ENCODE measurements at regions of chr15 and their contacts with region 1.

Region 1: DNA sequence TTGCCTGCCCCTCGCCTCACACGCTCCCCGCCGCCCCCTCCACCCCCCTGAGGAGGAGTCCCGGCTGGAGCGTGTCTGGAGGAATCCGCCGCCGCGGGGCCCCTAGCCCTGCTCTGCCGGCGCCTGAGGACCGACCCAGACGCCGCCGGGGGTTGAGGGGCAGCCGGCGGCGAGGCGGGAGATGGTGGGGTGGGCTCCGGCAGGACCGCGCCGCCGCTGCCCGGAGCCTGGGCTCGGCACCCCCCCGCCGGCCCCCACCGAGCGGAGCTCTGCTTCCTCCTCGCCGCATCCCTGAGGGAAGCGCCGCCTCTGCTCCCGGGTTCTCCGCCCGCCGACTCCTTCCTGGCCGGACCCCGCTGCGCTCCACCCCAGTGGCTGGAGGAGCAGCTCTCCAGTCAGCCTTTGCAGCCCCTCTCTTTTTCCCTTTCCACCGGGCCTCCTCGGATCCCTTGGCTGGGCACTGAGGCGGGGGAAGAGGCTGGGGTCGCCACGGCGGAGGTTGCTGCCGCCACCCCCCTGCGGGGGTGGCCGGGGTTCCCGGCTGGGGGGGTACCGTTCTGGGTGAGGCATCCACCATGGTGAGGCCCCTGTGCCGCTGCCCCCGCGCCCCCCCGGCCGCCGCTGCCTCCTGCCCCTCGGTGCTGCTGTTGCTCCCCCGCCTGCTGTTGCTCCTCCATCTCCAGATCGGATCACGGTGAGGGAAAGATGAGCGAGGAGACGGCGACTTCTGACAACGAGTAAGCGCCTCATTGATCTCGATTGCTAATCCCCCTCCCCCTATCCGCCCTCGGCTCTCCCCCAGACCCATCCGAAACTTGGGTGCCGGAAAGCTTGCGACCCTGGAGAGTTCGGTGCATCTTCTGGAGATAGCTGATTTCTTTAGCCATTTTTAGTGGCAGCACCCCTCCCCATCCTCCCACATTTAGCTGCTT is at the start of gene SPRED1:
- DNase-seq: peak; percentile 23 to 87 (median 74)

Region 2: GRCh38 chr15:38072348-38073177 is 180.2 kb before region 1 on chr15:
- intact Hi-C with region 1: loop called (anchors 1 kb)
- DNase-seq: peak; percentile 83 to 98 (median 93)

Region 3: DNA sequence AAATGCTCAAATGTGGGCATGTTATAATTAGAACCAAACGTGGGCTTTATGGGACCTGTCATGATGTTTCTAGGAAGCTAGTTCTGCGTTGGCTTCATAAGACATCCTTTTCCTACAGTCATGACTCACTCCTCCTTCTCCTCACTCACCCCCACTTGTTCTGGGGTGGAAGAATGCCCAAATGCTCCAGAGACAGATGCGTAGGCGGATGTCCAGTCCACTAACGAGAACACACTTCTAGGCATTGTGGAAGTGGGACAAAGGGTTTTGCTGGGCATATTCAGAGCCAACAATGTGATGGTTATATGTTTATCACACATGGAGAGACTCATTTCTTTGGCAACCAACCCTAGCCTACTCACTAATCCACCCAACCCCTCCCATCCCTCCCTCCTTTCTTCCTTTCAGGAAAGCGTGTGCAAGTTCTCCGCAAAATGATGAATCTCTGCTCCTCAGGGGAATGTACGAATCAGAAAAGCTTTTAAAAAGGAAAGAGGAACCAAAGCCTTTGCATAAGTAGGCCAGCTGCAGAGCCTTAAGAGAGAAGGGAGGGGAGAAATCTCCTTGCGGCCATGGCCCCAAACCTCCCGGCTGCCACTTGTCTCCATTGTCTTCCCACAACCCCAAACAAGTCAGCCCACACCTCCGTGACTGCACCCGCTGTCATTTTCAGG is 123.1 kb before region 1 on chr15:
- intact Hi-C with region 1: loop called (anchors 5 kb)
- DNase-seq: peak; percentile 26 to 92 (median 67)

Region 4: GRCh38 chr15:38324939-38325647 is 72.3 kb after region 1 on chr15:
- intact Hi-C with region 1: no loop called
- DNase-seq: no peak

Region 5: DNA sequence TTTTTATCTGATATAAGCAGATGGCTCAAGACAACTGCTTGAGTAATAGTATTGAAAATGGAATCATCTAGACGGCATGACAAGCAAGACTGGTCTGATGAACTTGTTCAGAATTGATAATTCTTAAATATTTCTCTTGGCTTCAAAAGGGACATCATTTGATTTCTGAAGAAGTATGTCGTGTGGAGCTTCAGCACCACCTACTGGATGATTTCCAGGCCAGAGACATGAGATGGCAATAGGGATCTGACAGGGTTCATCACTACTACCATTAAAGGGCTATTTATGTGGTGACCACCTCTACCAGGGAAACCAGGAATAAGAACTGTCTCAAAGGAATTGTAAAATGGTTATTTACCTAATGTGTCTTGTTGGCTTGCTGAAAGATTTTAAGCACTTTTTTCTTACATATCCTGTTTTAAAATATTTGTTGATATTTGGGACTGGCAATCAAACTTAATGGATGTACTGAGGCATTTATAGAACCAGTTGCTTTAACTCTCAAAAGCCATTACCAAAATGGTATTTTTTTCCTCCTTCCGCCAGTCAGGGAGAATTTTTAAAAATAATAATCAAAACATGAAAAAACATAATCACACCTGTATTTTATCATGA is 101.7 kb after region 1 on chr15:
- intact Hi-C with region 1: loop called (anchors 10 kb)
- DNase-seq: peak in 41 of 42 donors; percentile 16 to 91 (median 74)